Activated CD8-positive, alpha-beta memory T cell treated with anti-CD3 and anti-CD28 coated beads, Interleukin-2, amount 10 ng/mL, durations not matched to agents 7 days and 5 days (primary cell): ENCODE measurements at regions of chr20 and their contacts with region 1.

Region 1: GRCh38 chr20:330233-331149 is 5.1 kb downstream of the SOX12 start:
- DNase-seq: peak; percentile 75
- ATAC-seq: peak; percentile 48
- H3K4me3 Mint-ChIP-seq: no peak overlapping the region
- H3K27ac Mint-ChIP-seq: no peak overlapping the region
- H3K4me1 Mint-ChIP-seq: peaks cover 21% of the 10 kb centered on the region
- H3K27me3 Mint-ChIP-seq: no peaks in the 10 kb centered on the region

Region 2: GRCh38 chr20:168876-169275 is 161.6 kb before region 1 on chr20:
- CTCF ChIA-PET with region 1: no interaction called
- DNase-seq: no peak
- ATAC-seq: no peak
- H3K4me3 Mint-ChIP-seq: no peak overlapping the region
- H3K27ac Mint-ChIP-seq: no peak overlapping the region
- H3K4me1 Mint-ChIP-seq: no peaks in the 10 kb centered on the region
- H3K27me3 Mint-ChIP-seq: peaks cover 22% of the 10 kb centered on the region

Region 3: DNA sequence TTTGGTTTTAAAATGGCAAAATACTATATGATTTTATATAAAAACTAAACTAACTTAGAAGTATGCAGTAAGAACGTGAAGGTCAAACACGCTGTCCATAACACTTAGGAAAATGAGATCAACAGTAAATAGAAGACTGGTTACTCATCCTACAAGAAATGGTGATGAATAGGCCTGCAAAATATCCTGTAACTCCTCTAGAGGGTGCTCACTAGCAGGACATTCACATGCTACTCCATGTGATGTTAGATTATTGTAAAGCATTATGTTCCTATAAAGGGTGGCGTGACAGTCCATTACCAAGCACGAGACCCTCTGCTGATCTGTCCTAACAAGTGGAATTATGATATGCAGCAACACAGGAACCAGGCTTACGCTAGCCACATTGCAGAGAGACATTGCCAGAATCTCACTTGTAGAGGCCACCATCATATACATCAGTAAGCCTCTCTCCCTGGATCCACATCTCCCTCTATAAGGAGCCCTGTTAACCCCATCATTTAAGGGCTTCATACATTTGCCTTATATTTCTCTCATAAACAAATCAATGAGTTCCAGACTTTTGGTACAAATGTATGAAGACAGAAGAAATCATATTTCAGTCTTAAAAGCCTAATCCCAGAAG is 121.4 kb before region 1 on chr20:
- CTCF ChIA-PET with region 1: interaction called, 10 read pairs
- DNase-seq: no peak
- ATAC-seq: peak; percentile 80
- H3K4me3 Mint-ChIP-seq: no peak overlapping the region
- H3K27ac Mint-ChIP-seq: no peak overlapping the region
- H3K4me1 Mint-ChIP-seq: no peaks in the 10 kb centered on the region
- H3K27me3 Mint-ChIP-seq: peaks cover 20% of the 10 kb centered on the region

Region 4: DNA sequence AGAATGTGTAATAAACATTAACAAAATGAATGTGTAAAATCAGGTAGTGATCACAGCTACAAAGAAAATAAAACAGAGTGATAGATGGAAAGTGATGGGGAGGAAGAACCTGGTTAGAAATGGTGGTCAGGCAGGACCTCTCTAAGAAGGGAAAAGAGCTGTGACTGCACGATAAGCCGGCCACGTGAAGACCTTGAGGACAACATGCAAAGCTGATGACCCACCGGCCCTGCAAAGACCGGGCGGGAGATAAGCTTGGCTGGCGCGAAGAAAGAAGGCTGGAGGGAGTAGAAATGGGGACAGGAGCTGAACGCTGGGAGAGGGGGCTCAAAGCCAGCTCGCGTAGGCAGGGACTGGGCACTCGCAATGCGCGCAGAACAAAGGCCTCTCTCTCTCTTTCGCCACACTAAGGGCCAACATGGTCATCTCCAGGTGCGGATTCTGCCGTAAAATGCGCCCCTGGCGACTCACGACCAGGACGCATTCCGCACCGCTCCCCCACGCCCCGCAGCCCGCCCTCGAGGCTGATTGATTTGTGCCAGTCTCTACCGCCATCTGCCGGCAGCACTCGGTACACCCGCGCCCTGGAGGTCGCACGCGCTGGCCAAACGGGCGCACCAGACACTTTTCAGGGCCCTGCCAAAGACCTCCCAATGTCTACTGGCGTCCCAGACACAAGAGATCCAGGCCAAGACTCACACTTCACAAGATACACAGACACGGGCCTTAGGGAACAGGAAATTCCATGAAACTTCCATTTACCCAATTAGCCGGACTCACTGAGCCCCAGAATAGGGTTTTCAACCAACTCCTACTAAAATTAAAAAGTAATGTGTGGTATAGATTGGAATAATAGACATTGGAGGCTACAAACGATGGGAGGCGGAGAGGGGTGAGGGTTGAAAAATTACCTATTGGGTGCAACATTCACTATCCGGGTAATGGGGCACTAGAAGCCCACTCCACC is 63.6 kb before region 1 on chr20:
- CTCF ChIA-PET with region 1: interaction called, 43 read pairs
- DNase-seq: peak; percentile 92
- ATAC-seq: peak; percentile 97
- H3K4me3 Mint-ChIP-seq: peak overlapping the region; percentile 72
- H3K27ac Mint-ChIP-seq: no peak overlapping the region
- H3K4me1 Mint-ChIP-seq: peaks cover 10% of the 10 kb centered on the region
- H3K27me3 Mint-ChIP-seq: peaks cover 6% of the 10 kb centered on the region

Region 5: GRCh38 chr20:309841-310644 is 20.4 kb before region 1 on chr20:
- CTCF ChIA-PET with region 1: interaction called, 10 read pairs
- DNase-seq: peak; percentile 90
- ATAC-seq: peak; percentile 100
- H3K4me3 Mint-ChIP-seq: peak overlapping the region; percentile 52
- H3K27ac Mint-ChIP-seq: no peak overlapping the region
- H3K4me1 Mint-ChIP-seq: peaks cover 19% of the 10 kb centered on the region
- H3K27me3 Mint-ChIP-seq: no peaks in the 10 kb centered on the region

Region 6: DNA sequence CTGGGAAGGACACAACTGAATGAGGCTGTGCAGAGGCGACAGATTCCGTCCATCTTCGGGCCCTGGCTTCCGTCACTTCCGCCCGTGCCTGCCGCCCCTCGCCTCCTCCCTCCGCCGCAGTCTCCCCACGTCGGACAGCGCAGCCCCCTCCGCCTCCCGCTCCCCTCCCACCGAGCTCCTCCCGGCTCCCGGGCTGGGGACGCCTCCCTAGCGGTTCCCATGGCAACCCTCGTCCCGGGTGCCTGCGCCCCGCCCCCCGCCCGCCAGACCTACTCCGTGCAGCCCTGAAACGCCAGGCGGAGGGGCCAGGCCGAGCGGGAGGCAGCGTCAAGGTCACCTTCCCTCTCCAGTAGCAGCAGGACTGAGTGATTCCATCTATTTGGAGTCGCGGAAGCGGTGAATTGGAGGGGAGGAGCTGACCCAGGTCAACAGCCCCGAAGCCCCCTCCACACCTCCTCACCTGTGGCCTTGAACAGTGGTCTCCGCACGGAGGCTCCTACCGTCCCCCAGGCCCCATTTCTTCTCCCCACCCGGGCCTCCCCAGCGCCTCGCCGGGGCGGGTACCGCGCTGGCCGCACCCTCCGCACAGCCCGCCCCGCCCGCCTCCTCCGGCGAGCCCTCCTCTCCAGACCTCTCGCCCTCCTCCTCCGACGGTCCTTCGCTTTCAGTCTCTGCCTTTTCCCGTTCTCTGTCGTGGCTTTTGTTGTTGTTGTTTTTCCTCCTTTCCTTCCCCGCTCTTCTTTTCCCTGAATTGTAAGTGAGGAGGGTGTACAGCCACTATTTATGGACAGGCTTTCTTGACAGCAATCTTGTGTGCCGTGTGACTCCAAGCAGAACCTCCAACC is 17.4 kb after region 1 on chr20:
- CTCF ChIA-PET with region 1: interaction called, 11 read pairs
- DNase-seq: peak; percentile 78
- ATAC-seq: peak; percentile 91
- H3K4me3 Mint-ChIP-seq: peak overlapping the region; percentile 89
- H3K27ac Mint-ChIP-seq: peak overlapping the region; percentile 79
- H3K4me1 Mint-ChIP-seq: peaks cover 20% of the 10 kb centered on the region
- H3K27me3 Mint-ChIP-seq: peaks cover 5% of the 10 kb centered on the region